Right ventricle myocardium inferior (tissue), 1 donor: ENCODE measurements at regions of chr1 and their contacts with region 1.

Region 1: GRCh38 chr1:23577056-23578004 is 18.0 kb upstream of the ID3 start:
- DNase-seq: no peak
- ATAC-seq: peak; percentile 74

Region 2: GRCh38 chr1:23286401-23286800 is 290.9 kb before region 1 on chr1:
- intact Hi-C with region 1: no loop called
- DNase-seq: no peak
- ATAC-seq: no peak

Region 3: DNA sequence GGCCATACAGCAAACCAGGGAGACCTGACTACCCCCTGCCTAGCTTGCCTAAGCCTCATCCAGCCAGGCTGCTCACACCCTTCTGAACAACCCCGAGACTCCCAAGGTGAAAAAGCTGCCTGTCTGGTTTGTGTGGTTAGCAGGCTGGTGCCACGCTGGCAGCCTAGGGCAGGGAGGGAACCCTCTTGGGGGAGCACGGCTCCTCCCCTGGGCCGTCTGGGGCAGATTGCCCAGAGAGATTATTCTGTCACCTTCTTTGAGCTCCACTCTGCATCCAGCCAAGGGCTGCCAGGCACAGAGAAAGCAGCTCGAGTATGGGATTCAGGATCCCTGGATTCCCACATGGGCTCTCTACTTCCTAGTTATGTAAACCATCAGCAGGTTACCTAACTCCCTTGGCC is 125.3 kb before region 1 on chr1:
- intact Hi-C with region 1: no loop called
- DNase-seq: no peak
- ATAC-seq: no peak

Region 4: DNA sequence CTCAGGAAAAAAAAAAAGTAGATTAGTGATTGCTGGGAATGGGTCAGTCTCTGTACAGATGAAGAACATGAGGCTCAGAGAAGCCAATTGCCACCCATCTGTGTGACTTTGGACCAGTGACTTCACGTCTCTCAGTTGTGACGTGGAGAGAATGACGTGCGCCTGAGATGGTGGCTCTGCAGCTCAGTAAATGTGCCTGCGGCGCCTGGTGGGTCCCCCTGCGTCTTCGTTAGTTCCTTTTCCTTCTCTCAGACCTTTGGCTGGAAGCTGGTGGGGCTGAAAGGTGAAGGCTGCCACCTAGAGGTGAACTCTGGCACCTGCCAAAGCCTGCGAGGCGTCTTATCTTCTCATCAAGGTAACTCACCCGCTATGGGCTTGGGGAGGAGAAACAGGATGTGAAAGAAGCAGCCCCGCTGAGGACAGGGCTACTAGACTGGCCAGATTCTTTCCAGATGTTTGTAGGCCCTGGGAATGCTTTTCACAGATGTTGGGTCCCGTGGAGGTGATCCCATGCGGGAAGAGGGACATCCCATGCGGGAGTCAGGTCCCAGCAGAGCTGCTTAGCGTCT is 37.5 kb before region 1 on chr1:
- intact Hi-C with region 1: no loop called
- DNase-seq: peak; percentile 91
- ATAC-seq: peak; percentile 87

Region 5: GRCh38 chr1:23559136-23559984 is 18.0 kb before region 1 on chr1 and contains the start of gene ID3:
- intact Hi-C with region 1: loop called (anchors 2 kb)
- DNase-seq: peak; percentile 99
- ATAC-seq: peak; percentile 83
- total RNA-seq, gene ID3: 90.3 TPM